Heart left ventricle (tissue), 16 donors: ENCODE measurements at regions of chr22 and their contacts with region 1.

Region 1: DNA sequence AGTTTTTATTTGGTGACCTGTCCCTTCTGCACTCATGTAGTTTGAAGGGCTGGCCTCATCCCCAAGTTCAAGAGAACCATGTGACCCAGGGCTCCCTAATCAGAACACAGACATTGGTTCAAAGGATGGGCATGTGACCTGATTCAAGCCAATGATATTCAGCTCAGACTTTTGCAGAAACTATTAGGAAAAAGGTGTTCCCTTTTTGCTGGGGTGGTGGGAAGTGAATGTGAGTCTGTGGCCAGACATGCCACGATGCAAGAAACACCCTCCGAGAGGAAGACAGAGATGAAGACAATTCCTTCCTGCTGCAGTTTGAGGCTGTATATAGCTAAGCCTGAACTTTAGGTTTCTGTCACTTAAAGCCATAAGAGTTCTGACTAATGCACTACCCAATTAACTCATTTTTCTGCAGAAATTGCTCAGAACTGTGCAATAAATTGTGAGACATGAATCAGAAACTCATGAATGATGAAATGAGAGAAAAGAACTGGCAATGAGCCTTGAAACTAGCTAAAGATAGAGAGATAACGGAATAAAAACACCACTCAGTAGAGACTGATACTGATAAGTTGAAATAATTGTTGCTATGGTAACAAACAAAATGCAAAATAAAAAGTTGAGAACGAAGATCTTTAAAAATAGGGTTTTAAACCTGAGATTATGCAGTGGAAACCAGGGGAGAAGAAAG is 9.2 kb upstream of the MAPK1 start:
- DNase-seq: no peak
- ATAC-seq: no peak
- H3K4me3 ChIP-seq: no peak overlapping the region
- H3K27ac ChIP-seq: no peak overlapping the region
- H3K4me1 ChIP-seq: peaks cover 0 to 9% (median 0%) of the 10 kb centered on the region in 12 donors
- H3K27me3 ChIP-seq: no peaks in the 10 kb centered on the region
- CTCF ChIP-seq: no peak
- POLR2A ChIP-seq: no peak

Region 2: DNA sequence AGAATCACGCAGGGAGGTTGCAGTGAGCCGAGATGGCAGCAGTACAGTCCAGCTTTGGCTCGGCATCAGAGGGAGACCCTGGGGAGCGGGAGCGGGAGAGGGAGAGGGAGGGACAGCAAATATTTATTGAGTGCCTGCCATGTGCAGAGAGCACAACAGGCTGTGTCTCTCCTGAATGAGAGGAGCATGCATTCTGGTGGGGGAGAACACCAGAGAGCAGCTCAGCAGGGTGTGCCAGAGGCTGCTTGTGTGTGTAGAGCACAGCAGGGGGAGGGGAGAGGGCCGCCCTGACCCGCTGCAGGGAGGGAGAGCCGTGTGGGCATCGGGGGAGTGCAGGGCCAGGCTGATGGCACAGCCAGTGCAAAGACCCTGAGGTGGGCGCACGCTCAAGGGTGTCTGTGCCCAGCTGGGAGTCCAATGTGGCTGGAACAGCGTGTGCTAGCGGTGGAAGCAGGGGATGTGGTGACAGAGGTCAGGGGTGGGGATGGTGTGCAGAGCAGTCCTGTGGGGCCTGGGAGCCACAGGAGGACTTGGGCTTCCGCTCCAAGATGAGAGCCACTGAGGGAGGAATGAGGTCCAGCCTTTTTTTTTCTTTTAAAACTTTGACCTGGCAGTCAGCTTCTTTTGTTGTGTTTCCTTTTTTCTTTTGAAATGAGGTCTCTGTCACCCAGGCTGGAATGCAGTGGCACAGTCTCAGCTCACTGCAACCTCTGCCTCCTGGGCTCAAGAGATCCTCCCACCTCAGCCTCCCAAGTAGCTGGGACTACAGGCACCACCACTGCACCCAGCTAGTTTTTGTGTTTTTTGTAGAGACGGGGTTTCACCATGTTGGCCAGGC is 198.8 kb before region 1 on chr22:
- intact Hi-C with region 1: no loop called
- DNase-seq: no peak
- ATAC-seq: peak in 1 of 4 donors; percentile 16
- H3K4me3 ChIP-seq: no peak overlapping the region
- H3K27ac ChIP-seq: no peak overlapping the region
- H3K4me1 ChIP-seq: no peaks in the 10 kb centered on the region
- H3K27me3 ChIP-seq: no peaks in the 10 kb centered on the region
- CTCF ChIP-seq: no peak
- POLR2A ChIP-seq: no peak

Region 3: DNA sequence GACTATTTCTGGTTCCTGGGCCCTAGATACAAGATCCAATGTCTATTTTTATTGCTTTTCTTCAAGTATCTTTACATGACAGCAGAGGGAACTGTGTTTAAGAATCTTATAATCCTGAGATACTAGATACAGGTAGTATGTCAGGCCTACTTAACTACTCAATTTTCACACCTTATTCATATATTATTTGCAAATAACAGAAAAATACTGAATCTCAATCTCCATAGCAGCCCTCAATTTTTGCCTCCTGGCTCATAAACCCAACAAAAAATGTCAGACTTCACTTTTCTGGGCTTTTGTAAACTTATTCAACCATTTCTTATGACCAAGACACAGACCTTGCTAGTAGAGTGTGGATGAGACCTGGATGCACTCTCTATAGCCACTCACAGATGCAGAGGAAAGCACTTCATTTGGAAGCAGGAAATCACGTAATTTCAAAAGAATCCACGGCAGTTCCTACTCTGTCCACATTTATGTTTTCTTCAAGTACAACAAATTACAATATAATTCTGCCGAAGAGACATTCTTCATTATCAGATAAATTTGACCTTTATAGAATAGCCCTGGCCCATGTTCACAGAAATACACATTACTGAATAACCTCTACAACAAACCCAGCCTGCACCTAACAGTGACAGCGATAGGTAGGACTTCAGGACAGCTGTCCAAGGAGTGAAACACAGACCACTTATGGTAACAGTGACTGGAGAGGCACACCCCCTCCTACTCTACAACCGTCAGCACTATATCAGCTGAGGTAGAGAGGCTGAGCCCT is 79.0 kb before region 1 on chr22:
- intact Hi-C with region 1: loop called in 1 of 10 experiments (anchors 2 kb)
- DNase-seq: no peak
- ATAC-seq: peak in 3 of 4 donors; percentile 47 to 73 (median 61)
- H3K4me3 ChIP-seq: no peak overlapping the region
- H3K27ac ChIP-seq: peak overlapping the region in 8 of 12 donors; percentile 7 to 61 (median 28)
- H3K4me1 ChIP-seq: peaks cover 0 to 19% (median 12%) of the 10 kb centered on the region in 12 donors
- H3K27me3 ChIP-seq: no peaks in the 10 kb centered on the region
- CTCF ChIP-seq: no peak
- POLR2A ChIP-seq: no peak

Region 4: GRCh38 chr22:21921729-21922128 is 45.1 kb after region 1 on chr22:
- intact Hi-C with region 1: loop called in 1 of 10 experiments (anchors 10 kb)
- DNase-seq: no peak
- ATAC-seq: no peak
- H3K4me3 ChIP-seq: no peak overlapping the region
- H3K27ac ChIP-seq: no peak overlapping the region
- H3K4me1 ChIP-seq: peaks cover 0 to 13% (median 6%) of the 10 kb centered on the region in 12 donors
- H3K27me3 ChIP-seq: no peaks in the 10 kb centered on the region
- CTCF ChIP-seq: no peak
- POLR2A ChIP-seq: no peak